ENCODE measurements at regions of chr6 and their contacts with region 1.

Region 1: DNA sequence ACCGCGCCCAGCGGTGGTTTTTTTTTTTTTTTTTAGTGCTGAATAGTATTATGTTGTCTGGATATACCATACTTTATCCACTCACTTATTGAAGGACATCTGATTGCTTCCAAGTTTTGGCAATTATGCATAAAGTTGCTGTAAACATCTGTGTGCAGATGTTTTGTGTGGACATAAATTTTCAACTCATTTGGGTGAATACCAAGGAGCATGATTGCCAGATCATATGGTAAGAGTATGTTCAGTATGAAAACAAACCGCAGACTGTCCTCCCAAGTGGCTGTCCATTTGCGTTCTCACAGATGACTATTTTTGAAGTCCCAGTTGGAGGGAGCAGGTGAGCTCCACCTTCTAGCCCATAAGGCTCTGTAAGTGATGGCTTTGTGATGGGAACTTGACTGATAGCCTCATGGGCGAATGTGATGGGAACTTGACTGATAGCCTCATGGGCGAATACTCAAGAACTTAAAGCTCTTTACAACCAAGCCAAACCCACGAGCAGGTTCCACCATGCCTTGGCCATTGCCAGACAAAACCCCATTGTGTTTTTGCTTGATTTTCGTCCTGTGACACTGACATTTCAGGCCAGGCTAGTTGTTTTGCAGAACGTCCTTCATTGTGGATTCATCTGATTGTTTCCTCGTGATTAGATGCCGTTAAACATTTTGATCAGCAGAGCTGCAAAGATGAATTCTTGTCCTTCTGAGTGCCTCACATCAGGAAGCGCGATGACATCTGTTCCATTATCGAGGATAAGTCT is 51.0 kb downstream of the ZBTB2 start:
- DNase-seq: no peak
- H3K4me3 ChIP-seq: no peak overlapping the region
- CTCF ChIP-seq: no peak

Region 2: GRCh38 chr6:150915880-150916265 is 424.5 kb before region 1 on chr6:
- CTCF ChIA-PET with region 1: interaction called, 11 read pairs
- POLR2A ChIA-PET with region 1: no interaction called
- DNase-seq: no peak
- H3K4me3 ChIP-seq: no peak overlapping the region
- CTCF ChIP-seq: no peak

Measured in AG04449 (cell line).